Body of pancreas (tissue), 4 donors: ENCODE measurements at regions of chr13 and their contacts with region 1.

Region 1: GRCh38 chr13:100710176-100710575 is 35.6 kb upstream of the TMTC4 start:
- DNase-seq: no peak
- ATAC-seq: no peak
- H3K4me3 ChIP-seq: no peak overlapping the region
- H3K27ac ChIP-seq: no peak overlapping the region
- H3K4me1 ChIP-seq: no peaks in the 10 kb centered on the region
- H3K27me3 ChIP-seq: no peaks in the 10 kb centered on the region
- CTCF ChIP-seq: no peak
- POLR2A ChIP-seq: no peak

Region 2: DNA sequence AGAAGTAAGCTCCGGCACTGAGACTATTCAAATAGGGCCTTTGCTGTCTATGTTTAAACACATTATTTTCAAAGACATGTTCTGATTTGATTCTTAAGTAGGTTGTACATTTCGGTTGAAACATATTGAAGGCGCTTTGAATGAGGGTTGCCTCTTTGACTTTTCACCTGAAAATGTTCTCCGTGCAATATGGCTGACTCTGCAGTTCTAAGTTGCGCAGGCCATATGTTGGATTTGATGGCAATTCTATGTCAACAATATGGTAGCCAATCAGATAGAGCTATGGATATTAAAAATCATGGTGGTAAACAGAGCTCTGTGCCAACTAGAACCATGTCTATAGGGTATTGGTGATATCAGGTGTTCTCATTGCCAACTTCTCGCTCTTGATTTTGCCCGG is 398.8 kb after region 1 on chr13:
- intact Hi-C with region 1: loop called (anchors 10 kb)
- DNase-seq: no peak
- ATAC-seq: no peak
- H3K4me3 ChIP-seq: no peak overlapping the region
- H3K27ac ChIP-seq: no peak overlapping the region
- H3K4me1 ChIP-seq: no peaks in the 10 kb centered on the region
- H3K27me3 ChIP-seq: no peaks in the 10 kb centered on the region
- CTCF ChIP-seq: no peak
- POLR2A ChIP-seq: no peak